Mammary epithelial cell (primary cell): ENCODE measurements at regions of chr11 and their contacts with region 1.

Region 1: DNA sequence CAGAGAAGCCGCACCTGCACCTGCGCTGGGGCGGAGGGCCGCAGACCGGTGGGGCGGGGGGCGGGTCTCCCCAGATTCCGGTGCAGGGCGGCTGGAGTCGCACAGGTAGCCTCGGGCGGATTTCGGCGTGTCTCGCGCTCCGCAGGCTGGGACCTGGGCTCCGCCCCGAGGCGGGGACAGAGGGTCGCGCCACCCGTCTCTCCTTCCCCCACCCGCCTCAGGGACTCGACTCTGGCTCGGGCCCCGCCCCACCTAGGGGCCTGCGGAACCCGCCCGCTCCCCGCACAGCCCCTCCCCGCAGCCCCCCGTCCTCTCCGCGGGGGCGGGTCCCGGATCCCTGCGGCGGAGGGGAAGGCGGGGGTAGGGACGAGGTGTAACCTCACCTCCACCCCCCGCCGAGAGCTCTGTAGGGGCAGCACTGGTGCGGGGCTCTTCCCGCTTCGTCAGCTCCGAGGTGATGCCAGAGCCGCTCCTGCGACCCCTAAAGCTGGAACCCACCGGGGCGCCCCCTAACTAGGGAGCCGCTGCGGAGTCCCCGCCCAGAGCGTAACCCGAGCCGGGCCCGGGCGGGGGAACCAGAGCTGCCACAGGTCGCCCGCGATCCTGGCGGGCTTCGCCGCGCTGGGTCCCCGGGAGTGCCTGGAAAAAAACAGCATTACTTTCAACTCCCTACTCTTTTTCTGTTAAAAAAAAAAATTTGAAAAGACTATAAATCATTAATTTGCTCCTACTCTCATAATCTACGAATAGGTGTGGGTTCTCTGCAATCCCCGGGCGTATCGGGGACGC is at the start of gene SLC29A2:
- DNase-seq: peak; percentile 73
- H3K4me3 ChIP-seq: peak within 1 kb of the TSS; percentile 59 to 75 (median 70)
- H3K27ac ChIP-seq: no peak within 1 kb of the TSS
- H3K4me1 ChIP-seq: peaks cover 10% of the 10 kb centered on the region
- H3K27me3 ChIP-seq: no peaks in the 10 kb centered on the region
- CTCF ChIP-seq: no peak
- total RNA-seq, gene SLC29A2: 3.2 to 5.9 TPM

Region 2: GRCh38 chr11:66207876-66208275 is 163.9 kb before region 1 on chr11:
- CTCF ChIA-PET with region 1: no interaction called
- dilution Hi-C with region 1: no loop called
- in situ Hi-C with region 1: no loop called
- intact Hi-C with region 1: no loop called
- DNase-seq: no peak
- H3K4me3 ChIP-seq: no peak overlapping the region
- H3K27ac ChIP-seq: no peak overlapping the region
- H3K4me1 ChIP-seq: no peaks in the 10 kb centered on the region
- H3K27me3 ChIP-seq: no peaks in the 10 kb centered on the region
- CTCF ChIP-seq: no peak

Region 3: DNA sequence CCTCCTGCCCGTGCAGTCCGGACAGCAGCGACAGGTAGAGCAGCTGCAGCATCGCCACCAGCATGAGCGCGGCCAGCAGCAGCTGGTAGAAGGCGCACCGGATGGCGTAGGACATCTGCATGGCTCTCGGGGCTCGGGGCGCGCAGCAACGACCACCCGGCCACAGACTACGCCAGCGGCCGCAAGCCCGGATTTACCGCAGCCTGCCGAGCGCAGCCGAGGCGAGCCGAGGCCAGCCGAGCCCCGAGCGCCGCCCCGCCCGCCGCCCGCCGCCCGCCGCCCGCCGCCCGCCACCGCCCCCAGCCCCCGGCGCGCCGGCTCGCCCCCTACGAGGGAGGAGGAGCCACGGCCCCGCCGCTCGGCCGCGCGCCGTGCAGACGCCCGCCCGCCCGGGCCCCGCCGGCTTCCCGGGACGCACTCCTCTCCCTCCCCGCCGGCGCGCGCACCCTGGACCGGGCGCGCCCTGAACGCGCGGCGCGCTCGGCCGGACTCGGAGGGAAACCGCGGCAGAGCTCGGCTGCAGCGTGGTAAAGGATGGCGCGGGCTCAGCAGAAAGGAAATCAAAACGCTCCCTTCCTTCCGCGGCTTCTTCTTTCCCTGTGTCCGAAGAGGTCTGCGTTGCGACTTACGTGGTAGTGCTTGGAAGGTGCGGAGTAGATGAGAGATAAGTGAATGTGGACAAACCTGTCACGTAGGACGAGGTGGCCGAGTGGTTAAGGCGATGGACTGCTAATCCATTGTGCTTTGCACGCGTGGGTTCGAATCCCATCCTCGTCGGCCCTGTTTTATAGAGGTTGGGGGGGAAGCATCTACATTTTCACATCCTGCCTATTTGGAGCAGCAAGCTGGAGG is 24.2 kb before region 1 on chr11 and contains the start of gene B4GAT1:
- CTCF ChIA-PET with region 1: no interaction called
- dilution Hi-C with region 1: no loop called
- in situ Hi-C with region 1: no loop called
- intact Hi-C with region 1: loop called (anchors 2 kb)
- DNase-seq: peak; percentile 88
- H3K4me3 ChIP-seq: peak within 1 kb of the TSS; percentile 67 to 95 (median 91)
- H3K27ac ChIP-seq: peak within 1 kb of the TSS; percentile 30
- H3K4me1 ChIP-seq: peaks cover 42% of the 10 kb centered on the region
- H3K27me3 ChIP-seq: no peaks in the 10 kb centered on the region
- CTCF ChIP-seq: no peak
- total RNA-seq, gene B4GAT1: 10.1 to 15.5 TPM